ENCODE measurements at regions of chr10 and their contacts with region 1.

Region 1: GRCh38 chr10:20891338-20891714 is 5.8 kb downstream of the NEBL start:
- DNase-seq: peak; percentile 37 to 72
- H3K4me3 ChIP-seq: no peak overlapping the region
- H3K27ac ChIP-seq: no peak overlapping the region
- H3K4me1 ChIP-seq: no peaks in the 10 kb centered on the region
- H3K27me3 ChIP-seq: no peaks in the 10 kb centered on the region
- CTCF ChIP-seq: no peak

Region 2: DNA sequence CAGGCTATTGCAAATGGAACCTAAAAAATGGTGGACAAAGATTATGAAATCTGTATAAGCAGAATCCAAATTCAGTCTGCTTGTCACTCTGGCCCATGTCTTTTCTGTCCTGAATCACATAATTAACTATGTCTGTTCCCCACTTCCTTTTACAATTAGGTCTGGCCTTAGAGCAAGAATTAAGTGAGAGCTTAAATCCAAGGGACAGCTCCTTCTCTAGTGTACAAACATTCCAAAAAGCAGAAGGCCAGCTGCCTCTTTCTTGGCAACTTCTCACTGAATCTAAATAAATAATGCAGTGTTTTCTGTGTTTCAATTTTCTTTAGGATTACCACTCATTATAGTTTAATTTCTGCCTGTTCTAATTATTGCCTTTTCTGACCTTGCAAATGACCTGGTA is 45.1 kb after region 1 on chr10:
- CTCF ChIA-PET with region 1: no interaction called
- POLR2A ChIA-PET with region 1: no interaction called
- intact Hi-C with region 1: no loop called
- DNase-seq: no peak
- H3K4me3 ChIP-seq: no peak overlapping the region
- H3K27ac ChIP-seq: no peak overlapping the region
- H3K4me1 ChIP-seq: no peaks in the 10 kb centered on the region
- H3K27me3 ChIP-seq: no peaks in the 10 kb centered on the region
- CTCF ChIP-seq: no peak

Region 3: DNA sequence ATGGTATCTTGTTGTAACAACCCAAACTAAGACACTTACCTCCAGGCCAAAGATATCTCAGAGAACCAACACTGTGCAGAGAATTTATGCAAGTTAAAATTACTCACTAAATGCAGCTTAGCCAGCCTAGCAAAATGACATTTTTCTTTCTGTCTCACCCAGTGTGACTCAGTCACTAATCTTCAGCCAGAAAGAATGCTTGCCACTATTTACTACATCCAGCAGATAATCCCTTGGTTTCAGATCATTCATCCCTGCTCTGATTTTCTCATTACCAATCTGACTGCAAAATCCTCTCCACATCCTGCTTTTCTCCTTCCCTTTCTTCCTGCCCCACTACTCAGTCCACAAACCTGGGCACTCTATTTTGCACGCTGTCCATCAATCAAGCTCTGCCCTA is 99.3 kb after region 1 on chr10:
- CTCF ChIA-PET with region 1: no interaction called
- POLR2A ChIA-PET with region 1: no interaction called
- intact Hi-C with region 1: loop called (anchors 5 kb)
- DNase-seq: peak in 1 of 2 experiments; percentile 72
- H3K4me3 ChIP-seq: no peak overlapping the region
- H3K27ac ChIP-seq: no peak overlapping the region
- H3K4me1 ChIP-seq: peaks cover 35% of the 10 kb centered on the region
- H3K27me3 ChIP-seq: no peaks in the 10 kb centered on the region
- CTCF ChIP-seq: no peak